Activated CD8-positive, alpha-beta T cell treated with anti-CD3 and anti-CD28 coated beads, Interleukin-2, amount 10 ng/mL, durations not matched to agents 7 days and 5 days (primary cell): ENCODE measurements at regions of chr5 and their contacts with region 1.

Region 1: GRCh38 chr5:135829681-135830383 is 4.6 kb upstream of the SLC25A48 start:
- DNase-seq: peak; percentile 66
- ATAC-seq: peak; percentile 55
- H3K4me3 Mint-ChIP-seq: no peak overlapping the region
- H3K27ac Mint-ChIP-seq: no peak overlapping the region
- H3K4me1 Mint-ChIP-seq: peaks cover 3% of the 10 kb centered on the region
- H3K27me3 Mint-ChIP-seq: peaks cover 20% of the 10 kb centered on the region

Region 2: DNA sequence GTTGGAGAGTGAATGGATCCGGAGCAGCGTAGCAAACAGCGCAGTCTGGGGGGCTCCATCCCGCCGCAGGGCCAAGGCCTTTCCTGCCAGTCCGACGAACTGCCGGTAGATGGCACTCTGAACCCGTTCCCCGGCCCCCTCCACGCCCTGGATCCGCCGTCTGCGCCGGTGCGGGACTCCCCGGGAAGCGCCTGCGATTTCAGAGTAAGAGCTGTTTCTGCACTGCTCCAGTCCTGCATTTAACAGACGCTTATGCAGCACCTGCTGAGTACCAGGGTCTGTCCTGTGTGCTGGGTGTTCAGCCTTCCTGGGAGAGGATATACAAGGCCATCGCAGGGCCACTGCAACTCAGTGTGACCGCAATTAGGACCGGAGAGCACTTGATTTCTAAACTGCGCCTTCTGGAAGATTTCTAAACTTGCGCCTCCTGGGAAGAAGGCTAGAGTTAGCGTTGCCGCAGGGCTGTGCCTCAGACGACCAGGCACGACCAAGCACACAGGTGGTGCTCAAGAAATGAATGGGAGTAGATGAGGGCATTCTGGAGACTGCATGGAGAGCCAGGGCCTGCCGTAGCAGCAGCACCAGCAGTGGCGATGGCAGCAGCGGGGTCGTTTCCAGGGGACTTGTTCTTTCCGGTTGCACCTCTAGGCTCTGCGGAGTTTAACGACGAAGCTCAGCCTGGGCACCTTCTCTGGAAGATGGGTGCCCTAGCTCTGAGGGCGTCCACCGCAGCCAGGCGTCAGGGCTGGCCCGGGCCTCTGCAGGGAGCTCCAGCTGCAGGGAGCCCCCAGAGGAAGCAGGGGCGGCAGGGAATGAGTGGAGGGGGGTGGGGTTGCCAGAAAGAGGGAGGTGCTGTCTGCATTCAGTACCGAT is 363.4 kb before region 1 on chr5:
- CTCF ChIA-PET with region 1: interaction called, 12 read pairs
- POLR2A ChIA-PET with region 1: no interaction called
- DNase-seq: peak; percentile 78
- ATAC-seq: peak; percentile 86
- H3K4me3 Mint-ChIP-seq: no peak overlapping the region
- H3K27ac Mint-ChIP-seq: no peak overlapping the region
- H3K4me1 Mint-ChIP-seq: peaks cover 5% of the 10 kb centered on the region
- H3K27me3 Mint-ChIP-seq: peaks cover 46% of the 10 kb centered on the region

Region 3: DNA sequence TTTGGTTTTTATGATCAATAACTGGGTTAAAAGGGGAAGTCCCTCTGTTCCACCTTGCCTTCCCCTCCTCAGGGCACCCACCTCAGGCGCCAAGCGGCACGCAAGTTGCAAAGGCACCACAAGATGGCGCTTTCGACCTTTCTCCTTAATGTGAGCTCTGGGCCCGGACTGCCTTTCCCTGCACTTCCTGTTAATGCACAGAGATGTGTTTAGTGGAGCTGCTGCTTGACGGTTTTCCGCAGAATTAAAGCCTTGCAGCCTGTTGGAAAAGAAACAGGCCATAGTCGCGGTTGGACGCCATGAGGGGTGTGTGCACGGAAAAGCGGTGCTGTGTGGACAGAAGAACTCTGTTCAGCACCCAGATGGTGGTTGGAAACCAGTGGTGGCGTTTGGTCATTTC is 269.0 kb before region 1 on chr5:
- CTCF ChIA-PET with region 1: interaction called, 30 read pairs
- POLR2A ChIA-PET with region 1: no interaction called
- DNase-seq: peak; percentile 82
- ATAC-seq: peak; percentile 91
- H3K4me3 Mint-ChIP-seq: no peak overlapping the region
- H3K27ac Mint-ChIP-seq: no peak overlapping the region
- H3K4me1 Mint-ChIP-seq: peaks cover 2% of the 10 kb centered on the region
- H3K27me3 Mint-ChIP-seq: peaks cover 30% of the 10 kb centered on the region

Region 4: DNA sequence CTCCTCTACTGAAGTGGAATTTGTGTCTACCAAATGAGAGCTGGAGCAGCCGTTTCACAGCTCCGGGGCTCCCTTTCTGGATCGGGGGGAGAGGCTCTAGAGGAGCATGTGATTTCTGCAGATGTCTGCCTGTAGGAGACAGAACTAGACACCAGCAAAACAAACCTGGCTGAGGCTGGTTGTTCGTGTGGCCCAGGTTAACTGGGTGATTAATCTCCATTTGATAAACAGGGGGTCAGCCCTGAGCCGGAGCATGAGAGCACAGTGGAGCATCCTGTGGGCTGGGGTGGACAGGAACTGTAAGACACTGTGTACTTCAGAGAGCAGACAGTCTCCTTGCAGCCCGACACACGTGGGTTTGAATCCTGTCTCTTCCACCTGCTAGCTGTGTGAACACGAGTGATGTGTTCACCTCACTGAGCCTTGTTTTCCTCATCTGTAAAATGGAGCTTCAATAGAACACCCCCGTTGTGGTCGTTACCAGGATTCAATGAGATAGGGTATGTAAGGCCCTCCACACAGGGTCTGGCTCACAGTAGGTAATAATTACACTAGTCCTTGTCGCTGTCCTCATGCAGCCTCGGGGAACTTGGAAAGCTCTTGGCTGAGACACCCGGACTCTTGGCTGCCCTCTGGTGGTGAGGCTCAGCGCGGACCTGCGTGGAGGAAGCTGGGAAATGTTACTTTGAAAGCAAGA is 264.0 kb before region 1 on chr5:
- CTCF ChIA-PET with region 1: interaction called, 30 read pairs
- POLR2A ChIA-PET with region 1: no interaction called
- DNase-seq: peak; percentile 76
- ATAC-seq: peak; percentile 85
- H3K4me3 Mint-ChIP-seq: no peak overlapping the region
- H3K27ac Mint-ChIP-seq: no peak overlapping the region
- H3K4me1 Mint-ChIP-seq: peaks cover 3% of the 10 kb centered on the region
- H3K27me3 Mint-ChIP-seq: peaks cover 9% of the 10 kb centered on the region

Region 5: DNA sequence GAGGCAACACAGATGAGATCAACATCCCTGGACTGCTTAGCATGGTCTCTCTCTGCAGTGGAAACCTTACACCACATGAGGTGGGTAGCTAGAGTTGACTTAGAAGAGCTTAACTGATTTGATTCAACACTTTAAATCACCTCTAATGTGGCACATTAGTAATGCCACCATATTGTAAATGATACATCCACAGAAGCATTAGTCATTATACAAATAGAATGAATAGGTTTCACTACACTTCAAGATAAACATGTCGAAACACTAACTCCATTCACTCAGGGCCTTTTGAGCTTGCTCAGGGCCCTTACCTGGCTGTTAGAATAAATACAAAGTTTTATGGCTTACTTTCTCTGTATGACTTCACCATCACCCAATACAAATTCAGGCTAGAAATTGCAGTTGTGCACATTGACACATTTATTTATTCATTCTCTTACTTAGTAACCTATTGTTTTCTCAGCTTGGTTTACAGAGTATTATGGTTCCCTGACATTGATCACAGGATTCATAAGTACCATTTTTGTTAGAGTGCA is 293.5 kb after region 1 on chr5:
- CTCF ChIA-PET with region 1: no interaction called
- POLR2A ChIA-PET with region 1: no interaction called
- DNase-seq: no peak
- ATAC-seq: no peak
- H3K4me3 Mint-ChIP-seq: no peak overlapping the region
- H3K27ac Mint-ChIP-seq: no peak overlapping the region
- H3K4me1 Mint-ChIP-seq: no peaks in the 10 kb centered on the region
- H3K27me3 Mint-ChIP-seq: peaks cover 38% of the 10 kb centered on the region